Activated T-helper 1 cell treated with anti-CD3 and anti-CD28 coated beads, Interleukin-12 subunit alpha, Interleukin-12 subunit beta, Interleukin-2, Interleukin-4 antibody, amounts not matched to agents 30 ng/mL and 10 ng/mL and 1 ng/mL, durations not matched to agents 14 hours and 24 hours and 36 hours (primary cell): ENCODE measurements at regions of chr3 and their contacts with region 1.

Region 1: DNA sequence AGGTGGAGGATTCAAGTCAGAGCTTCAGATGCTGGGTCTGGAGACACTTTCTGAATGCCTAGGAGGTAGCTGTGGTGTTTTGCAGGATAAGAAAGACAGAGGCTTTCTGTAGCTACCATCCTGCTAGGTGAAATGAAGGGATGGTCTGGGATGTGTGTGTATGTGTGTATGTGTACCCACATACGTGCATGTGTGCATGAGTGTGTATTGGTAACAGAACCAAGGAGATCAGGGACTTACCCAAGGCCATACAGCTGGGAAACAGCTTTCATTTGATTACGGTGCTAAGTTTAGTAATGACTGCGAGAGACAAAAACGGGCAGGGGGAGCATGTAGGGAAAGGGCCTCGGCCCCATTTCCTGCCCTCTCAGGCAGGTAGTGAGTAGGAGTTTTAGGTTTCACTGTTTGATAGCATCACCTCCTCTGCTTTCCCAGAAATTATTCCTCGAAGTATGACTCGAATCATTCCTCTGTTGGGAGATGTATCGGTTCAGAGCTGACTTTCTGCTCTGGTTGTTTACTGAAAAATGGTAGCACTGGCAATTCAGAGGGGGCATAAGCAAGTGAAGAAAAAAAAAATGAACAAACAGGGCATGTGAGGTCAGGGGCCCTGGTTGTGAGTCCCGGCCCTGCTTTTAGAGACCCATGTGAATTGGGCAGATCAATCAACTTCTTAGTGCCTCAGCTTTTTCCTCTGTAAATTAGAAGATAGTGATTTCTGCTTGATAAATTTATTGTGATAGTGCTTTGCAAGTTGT is 130.7 kb downstream of the LPP start:
- DNase-seq: peak; percentile 26
- H3K4me3 Mint-ChIP-seq: peak overlapping the region; percentile 57
- H3K27ac Mint-ChIP-seq: peak overlapping the region; percentile 90
- H3K4me1 Mint-ChIP-seq: peaks cover 55% of the 10 kb centered on the region
- H3K27me3 Mint-ChIP-seq: peaks cover 2% of the 10 kb centered on the region

Region 2: GRCh38 chr3:187994221-187995042 is 290.2 kb before region 1 on chr3:
- intact Hi-C with region 1: loop called (anchors 1 kb)
- DNase-seq: no peak
- H3K4me3 Mint-ChIP-seq: peak overlapping the region; percentile 5
- H3K27ac Mint-ChIP-seq: peak overlapping the region; percentile 79
- H3K4me1 Mint-ChIP-seq: peaks cover 80% of the 10 kb centered on the region
- H3K27me3 Mint-ChIP-seq: no peaks in the 10 kb centered on the region

Region 3: GRCh38 chr3:188257384-188258026 is 27.1 kb before region 1 on chr3:
- intact Hi-C with region 1: loop called (anchors 1 kb)
- DNase-seq: no peak
- H3K4me3 Mint-ChIP-seq: no peak overlapping the region
- H3K27ac Mint-ChIP-seq: peak overlapping the region; percentile 63
- H3K4me1 Mint-ChIP-seq: peaks cover 62% of the 10 kb centered on the region
- H3K27me3 Mint-ChIP-seq: peaks cover 2% of the 10 kb centered on the region

Region 4: DNA sequence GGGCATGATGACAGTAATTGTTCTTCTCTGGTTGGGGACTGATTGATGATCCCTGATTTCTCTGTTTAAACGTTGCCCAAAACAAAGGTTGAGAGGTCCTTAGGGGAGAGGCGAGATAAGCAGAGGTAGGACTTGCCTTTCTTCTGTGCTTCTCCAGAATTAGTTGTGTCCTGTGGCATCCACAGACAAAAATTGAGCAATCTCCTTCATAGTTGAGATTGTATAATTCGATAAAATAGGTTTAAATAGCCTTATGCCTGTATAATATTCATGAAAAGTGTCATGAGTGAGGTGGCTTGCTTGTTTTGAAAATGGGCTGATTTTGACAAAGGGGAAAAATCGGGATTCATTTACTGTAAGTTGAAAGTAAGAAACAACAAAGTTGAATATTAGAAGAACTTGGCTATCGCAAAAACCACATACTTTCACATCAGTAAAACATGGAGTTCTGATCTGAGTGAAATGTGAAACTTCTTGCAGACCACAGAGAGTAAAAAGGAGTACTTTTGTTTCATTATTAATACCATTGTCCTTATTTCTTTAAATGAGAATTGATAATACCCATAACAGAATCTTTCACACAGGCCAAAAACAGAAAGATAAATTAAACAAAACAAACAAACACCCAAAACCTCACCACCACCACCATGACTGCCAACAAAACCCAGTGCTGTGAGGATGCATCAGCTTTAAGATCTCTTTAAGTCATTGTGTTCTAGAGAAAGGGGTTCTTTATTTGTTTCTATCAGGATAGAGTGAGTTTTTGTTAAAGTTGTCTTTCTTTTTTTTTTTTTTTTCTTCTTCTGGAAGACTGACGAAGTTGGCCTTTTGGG is 25.0 kb after region 1 on chr3:
- intact Hi-C with region 1: loop called (anchors 1 kb)
- DNase-seq: no peak
- H3K4me3 Mint-ChIP-seq: peak overlapping the region; percentile 40
- H3K27ac Mint-ChIP-seq: peak overlapping the region; percentile 64
- H3K4me1 Mint-ChIP-seq: peaks cover 35% of the 10 kb centered on the region
- H3K27me3 Mint-ChIP-seq: peaks cover 9% of the 10 kb centered on the region

Region 5: DNA sequence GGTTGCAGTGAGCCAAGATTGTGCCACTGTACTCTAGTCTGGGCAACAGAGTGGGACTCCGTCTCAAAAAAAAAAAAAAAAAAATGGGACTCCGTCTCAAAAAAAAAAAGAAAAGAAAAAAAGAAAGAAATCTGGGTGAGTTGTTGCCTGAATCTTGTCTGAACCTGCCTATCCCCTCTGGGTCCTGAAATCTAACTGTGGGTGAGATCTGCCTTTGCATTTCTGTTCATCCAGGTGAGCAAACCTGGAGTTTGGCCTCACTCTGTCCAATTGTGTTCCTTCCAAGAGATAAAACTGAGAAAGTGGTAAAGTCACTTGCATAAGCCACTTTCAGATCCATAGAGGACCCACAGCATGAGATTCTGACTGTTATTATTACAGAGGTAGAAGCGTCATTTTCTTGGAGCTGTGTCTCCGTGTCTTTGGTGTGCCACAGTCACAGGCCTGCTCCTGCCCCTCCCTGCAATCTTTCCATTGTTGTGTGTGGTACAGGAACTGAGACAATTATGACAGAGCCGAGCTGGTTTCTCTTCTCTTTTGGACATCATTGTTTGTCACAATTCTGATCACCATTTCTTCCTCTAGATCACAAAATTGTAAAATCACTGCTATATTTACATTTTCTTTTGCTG is 105.2 kb after region 1 on chr3:
- intact Hi-C with region 1: loop called (anchors 1 kb)
- DNase-seq: peak; percentile 33
- H3K4me3 Mint-ChIP-seq: peak overlapping the region; percentile 25
- H3K27ac Mint-ChIP-seq: peak overlapping the region; percentile 86
- H3K4me1 Mint-ChIP-seq: peaks cover 44% of the 10 kb centered on the region
- H3K27me3 Mint-ChIP-seq: peaks cover 1% of the 10 kb centered on the region

Region 6: DNA sequence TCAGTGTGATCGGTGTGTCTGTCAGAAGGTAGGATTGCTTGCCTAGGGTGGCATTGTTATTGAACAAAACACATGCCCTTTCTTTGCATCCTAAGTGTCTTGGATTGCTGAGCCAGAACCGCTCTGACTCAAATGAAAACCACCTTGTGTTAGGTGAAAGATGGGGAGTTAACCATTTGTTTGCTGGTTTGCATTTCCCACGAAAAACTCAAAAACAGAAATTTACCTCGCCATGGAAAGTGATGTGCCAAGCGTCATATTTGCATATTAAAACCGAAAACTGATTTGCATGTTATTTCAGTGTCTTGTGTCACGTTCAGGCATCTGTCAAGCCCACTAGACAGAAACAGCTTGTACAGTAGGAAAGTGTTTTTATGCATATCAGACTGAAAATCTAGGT is 412.5 kb after region 1 on chr3:
- intact Hi-C with region 1: loop called (anchors 1 kb)
- DNase-seq: no peak
- H3K4me3 Mint-ChIP-seq: no peak overlapping the region
- H3K27ac Mint-ChIP-seq: peak overlapping the region; percentile 18
- H3K4me1 Mint-ChIP-seq: peaks cover 36% of the 10 kb centered on the region
- H3K27me3 Mint-ChIP-seq: peaks cover 5% of the 10 kb centered on the region